Psoas muscle (tissue), 8 donors: ENCODE measurements at regions of chr16 and their contacts with region 1.

Region 1: GRCh38 chr16:58533751-58534470 is 18.6 kb downstream of the SETD6 start:
- DNase-seq: peak in 1 of 2 donors; percentile 73
- ATAC-seq: peak; percentile 78 to 92 (median 90)
- H3K4me3 ChIP-seq: no peak overlapping the region
- H3K27ac ChIP-seq: peak overlapping the region; percentile 42
- H3K4me1 ChIP-seq: peaks cover 5% of the 10 kb centered on the region
- H3K27me3 ChIP-seq: no peaks in the 10 kb centered on the region
- CTCF ChIP-seq: no peak

Region 2: DNA sequence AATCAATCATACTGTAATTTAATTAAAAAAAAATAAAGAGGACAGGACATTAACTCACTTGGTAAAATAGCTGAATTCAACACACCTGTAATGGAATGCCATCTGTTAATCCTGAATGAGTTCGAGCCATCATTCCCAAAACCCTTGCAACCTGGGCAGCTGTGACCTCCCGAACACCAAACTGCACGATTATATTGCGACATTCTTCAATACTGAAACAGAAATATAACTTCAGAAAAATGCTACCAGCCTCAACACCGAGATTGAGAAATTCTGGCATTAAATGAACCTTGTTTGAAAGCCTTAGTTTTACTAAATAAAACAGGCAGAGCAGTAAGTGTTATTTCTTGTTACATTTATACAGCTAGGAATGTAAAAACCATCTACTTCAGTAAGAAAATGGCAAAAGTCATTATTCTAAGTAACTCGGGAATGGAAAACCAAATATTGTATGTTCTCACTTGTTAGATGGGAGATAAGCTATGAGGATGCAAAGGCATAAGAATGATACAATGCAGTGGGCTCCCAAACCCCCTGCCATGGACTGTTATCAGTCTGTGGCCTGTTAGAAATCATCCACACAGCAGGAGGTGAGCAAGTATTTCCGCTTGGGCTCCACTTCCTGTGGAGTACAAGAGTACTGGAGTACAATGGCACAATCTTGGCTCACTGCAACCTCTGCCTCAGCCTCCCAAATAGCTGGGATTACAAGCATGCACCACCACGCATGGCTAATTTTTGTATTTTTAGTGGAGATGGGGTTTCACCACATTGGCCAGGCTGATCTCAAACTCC is 49.3 kb after region 1 on chr16:
- intact Hi-C with region 1: loop called (anchors 5 kb)
- DNase-seq: no peak
- ATAC-seq: peak in 1 of 4 donors; percentile 29
- H3K4me3 ChIP-seq: no peak overlapping the region
- H3K27ac ChIP-seq: no peak overlapping the region
- H3K4me1 ChIP-seq: no peaks in the 10 kb centered on the region
- H3K27me3 ChIP-seq: no peaks in the 10 kb centered on the region
- CTCF ChIP-seq: no peak

Region 3: DNA sequence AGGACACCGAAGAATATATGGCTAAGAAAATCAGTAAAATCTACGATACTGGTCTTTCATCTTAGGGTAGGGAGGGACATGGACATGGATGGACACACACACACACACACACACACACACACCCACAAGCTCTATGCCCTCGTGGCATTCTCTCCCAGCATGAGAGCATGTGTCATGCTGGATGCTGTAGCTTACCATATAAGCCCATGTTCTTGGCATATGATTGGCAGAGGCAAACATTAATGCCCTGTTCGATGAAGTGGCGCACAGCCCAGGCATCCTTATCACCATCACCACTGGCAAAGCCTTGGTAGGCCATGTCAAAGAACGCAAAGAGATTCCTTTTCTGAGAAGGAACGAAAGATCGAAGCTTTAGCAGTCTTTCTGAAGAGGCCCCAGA is 182.6 kb after region 1 on chr16:
- intact Hi-C with region 1: loop called in 1 of 2 experiments (anchors 10 kb)
- DNase-seq: no peak
- ATAC-seq: no peak
- H3K4me3 ChIP-seq: no peak overlapping the region
- H3K27ac ChIP-seq: no peak overlapping the region
- H3K4me1 ChIP-seq: no peaks in the 10 kb centered on the region
- H3K27me3 ChIP-seq: no peaks in the 10 kb centered on the region
- CTCF ChIP-seq: no peak